Heart right ventricle (tissue), 16 donors: ENCODE measurements at regions of chr13 and their contacts with region 1.

Region 1: GRCh38 chr13:80132741-80133601 is 208.0 kb downstream of the SPRY2 start:
- DNase-seq: peak; percentile 32 to 81
- ATAC-seq: peak; percentile 83 to 97 (median 91)
- H3K4me3 ChIP-seq: peak overlapping the region in 9 of 10 donors; percentile 14 to 50 (median 37)
- H3K27ac ChIP-seq: peak overlapping the region; percentile 76 to 93 (median 86)
- H3K4me1 ChIP-seq: peaks cover 6 to 45% (median 39%) of the 10 kb centered on the region in 9 donors
- H3K27me3 ChIP-seq: no peaks in the 10 kb centered on the region
- CTCF ChIP-seq: peak in 3 of 9 donors; percentile 12 to 24 (median 23)

Region 2: GRCh38 chr13:79679334-79679733 is 453.6 kb before region 1 on chr13:
- intact Hi-C with region 1: loop called in 1 of 10 experiments (anchors 5 kb)
- DNase-seq: peak; percentile 44 to 77
- ATAC-seq: peak; percentile 53 to 76 (median 63)
- H3K4me3 ChIP-seq: no peak overlapping the region
- H3K27ac ChIP-seq: no peak overlapping the region
- H3K4me1 ChIP-seq: peaks cover 0 to 17% (median 0%) of the 10 kb centered on the region in 9 donors
- H3K27me3 ChIP-seq: no peaks in the 10 kb centered on the region
- CTCF ChIP-seq: peak; percentile 56 to 85 (median 78)

Region 3: DNA sequence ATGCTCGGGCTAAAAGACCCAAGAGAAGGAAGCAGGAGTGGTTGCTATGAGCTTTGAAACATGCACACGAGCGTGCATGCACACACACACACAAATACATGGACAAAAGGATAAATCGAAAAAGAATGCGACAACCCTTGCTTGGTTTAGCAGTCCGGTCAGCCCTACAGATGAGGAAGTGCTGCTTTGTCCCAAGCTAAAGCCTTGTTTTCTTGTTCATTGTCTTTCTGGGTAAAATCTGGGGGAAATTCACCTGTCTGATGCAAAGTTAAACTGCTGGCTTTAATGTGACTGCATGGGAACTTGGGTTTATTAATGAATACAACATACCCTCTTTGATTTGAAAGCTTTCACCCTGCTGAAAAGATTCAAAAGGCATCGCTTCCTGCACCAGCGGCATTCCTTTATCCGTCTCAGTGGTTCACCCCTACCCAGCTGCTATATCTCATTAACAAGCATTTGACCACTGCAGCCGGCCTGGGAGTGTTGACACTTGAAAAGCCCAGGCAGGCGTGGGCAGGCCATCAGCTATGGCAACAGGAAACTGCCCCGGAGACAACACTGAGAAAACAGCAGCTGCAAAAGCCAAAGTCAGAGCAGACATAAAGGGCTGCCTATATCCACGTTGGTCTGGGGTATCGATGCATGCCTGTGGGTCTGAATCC is 350.3 kb before region 1 on chr13:
- intact Hi-C with region 1: loop called in 2 of 10 experiments (anchors 10 kb)
- DNase-seq: peak; percentile 62 to 77
- ATAC-seq: peak; percentile 90 to 99 (median 96)
- H3K4me3 ChIP-seq: peak overlapping the region in 3 of 10 donors; percentile 0 to 9 (median 3)
- H3K27ac ChIP-seq: peak overlapping the region in 6 of 10 donors; percentile 27 to 56 (median 44)
- H3K4me1 ChIP-seq: peaks cover 0 to 28% (median 15%) of the 10 kb centered on the region in 9 donors
- H3K27me3 ChIP-seq: no peaks in the 10 kb centered on the region
- CTCF ChIP-seq: no peak

Region 4: GRCh38 chr13:80040196-80040980 is 92.6 kb before region 1 on chr13:
- intact Hi-C with region 1: loop called in 4 of 10 experiments (anchors 5 to 10 kb)
- DNase-seq: no peak
- ATAC-seq: peak in 1 of 8 donors; percentile 94
- H3K4me3 ChIP-seq: no peak overlapping the region
- H3K27ac ChIP-seq: no peak overlapping the region
- H3K4me1 ChIP-seq: peaks cover 0 to 36% (median 0%) of the 10 kb centered on the region in 9 donors
- H3K27me3 ChIP-seq: no peaks in the 10 kb centered on the region
- CTCF ChIP-seq: no peak

Region 5: DNA sequence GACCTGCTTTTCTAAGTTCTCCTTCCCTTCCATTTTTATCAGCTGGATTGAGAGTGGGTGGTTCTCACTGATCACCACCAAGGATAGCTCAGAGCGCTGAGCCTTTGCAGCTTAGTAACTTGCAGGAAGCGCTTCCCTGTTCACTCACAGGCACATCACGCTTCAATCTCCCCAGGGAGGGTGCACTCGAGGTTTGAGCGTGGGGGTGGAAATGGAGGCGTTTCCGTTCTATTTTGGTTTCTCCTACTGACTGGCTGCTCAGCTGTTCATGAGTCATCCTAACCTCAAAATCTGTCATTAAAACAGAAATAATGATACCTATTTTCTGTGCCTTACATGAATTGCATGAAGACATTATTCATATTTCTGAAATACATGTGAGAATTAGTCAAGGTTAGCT is 84.2 kb before region 1 on chr13:
- intact Hi-C with region 1: loop called in 4 of 10 experiments (anchors 1 to 10 kb)
- DNase-seq: peak; percentile 69 to 93
- ATAC-seq: peak; percentile 95 to 100 (median 99)
- H3K4me3 ChIP-seq: no peak overlapping the region
- H3K27ac ChIP-seq: peak overlapping the region in 8 of 10 donors; percentile 8 to 74 (median 55)
- H3K4me1 ChIP-seq: peaks cover 6 to 35% (median 29%) of the 10 kb centered on the region in 9 donors
- H3K27me3 ChIP-seq: no peaks in the 10 kb centered on the region
- CTCF ChIP-seq: no peak

Region 6: DNA sequence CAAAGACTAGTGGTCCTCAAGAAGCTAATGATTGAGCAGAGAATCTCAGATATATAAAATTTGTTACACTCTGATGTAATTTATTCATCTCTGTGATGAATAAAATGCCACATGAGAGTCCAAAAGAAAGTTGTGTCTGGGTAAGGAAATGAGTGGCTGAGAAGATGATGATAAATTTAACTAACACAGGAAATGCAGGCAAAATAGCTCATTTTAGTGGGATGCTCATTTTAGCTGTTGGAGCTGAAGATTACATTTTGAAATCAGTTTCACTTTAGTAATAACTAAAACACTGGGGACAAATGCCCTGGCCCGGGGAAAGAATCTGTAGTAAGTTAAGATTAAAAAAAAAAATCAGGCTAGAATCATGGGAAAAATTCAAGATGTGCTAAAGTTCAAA is 172.8 kb after region 1 on chr13:
- intact Hi-C with region 1: loop called in 1 of 10 experiments (anchors 10 kb)
- DNase-seq: no peak
- ATAC-seq: peak in 1 of 8 donors; percentile 25
- H3K4me3 ChIP-seq: peak overlapping the region in 3 of 10 donors; percentile 5 to 21 (median 17)
- H3K27ac ChIP-seq: peak overlapping the region in 9 of 10 donors; percentile 13 to 79 (median 52)
- H3K4me1 ChIP-seq: peaks cover 0 to 33% (median 22%) of the 10 kb centered on the region in 9 donors
- H3K27me3 ChIP-seq: no peaks in the 10 kb centered on the region
- CTCF ChIP-seq: no peak